Panc1 (cell line): ENCODE measurements at regions of chr7 and their contacts with region 1.

Region 1: DNA sequence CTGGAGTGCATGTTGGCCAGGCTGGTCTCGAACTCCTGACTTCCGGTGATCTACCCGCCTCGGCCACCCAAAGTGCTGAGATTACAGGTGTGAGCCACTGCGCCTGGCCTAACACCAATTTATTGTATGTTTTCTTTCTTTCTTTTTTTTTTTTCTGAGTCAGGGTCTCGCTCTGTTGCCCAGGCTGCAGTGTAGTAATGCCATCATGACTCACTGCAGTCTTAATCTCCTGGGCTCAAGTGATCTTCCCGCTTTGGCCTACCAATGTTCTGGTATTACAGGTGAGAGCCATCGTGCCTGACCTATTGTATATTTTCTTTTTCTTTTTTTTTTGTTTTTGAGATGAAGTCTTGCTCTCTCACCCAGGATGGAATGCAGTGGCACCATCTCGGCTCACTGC is 33.8 kb upstream of the UBE2H start:
- DNase-seq: no peak
- ATAC-seq: no peak
- H3K4me3 ChIP-seq: no peak overlapping the region
- H3K27ac ChIP-seq: no peak overlapping the region
- H3K4me1 ChIP-seq: no peaks in the 10 kb centered on the region
- H3K27me3 ChIP-seq: no peaks in the 10 kb centered on the region
- CTCF ChIP-seq: no peak

Region 2: GRCh38 chr7:129959471-129960203 is 27.0 kb before region 1 on chr7:
- CTCF ChIA-PET with region 1: no interaction called
- POLR2A ChIA-PET with region 1: interaction called, 30 read pairs
- in situ Hi-C with region 1: no loop called
- intact Hi-C with region 1: no loop called
- DNase-seq: no peak
- ATAC-seq: no peak
- H3K4me3 ChIP-seq: no peak overlapping the region
- H3K27ac ChIP-seq: no peak overlapping the region
- H3K4me1 ChIP-seq: peaks cover 6% of the 10 kb centered on the region; the same call in 1 of the 2 replicates
- H3K27me3 ChIP-seq: no peaks in the 10 kb centered on the region
- CTCF ChIP-seq: no peak